Aorta (tissue), 5 donors: ENCODE measurements at regions of chr1 and their contacts with region 1.

Region 1: DNA sequence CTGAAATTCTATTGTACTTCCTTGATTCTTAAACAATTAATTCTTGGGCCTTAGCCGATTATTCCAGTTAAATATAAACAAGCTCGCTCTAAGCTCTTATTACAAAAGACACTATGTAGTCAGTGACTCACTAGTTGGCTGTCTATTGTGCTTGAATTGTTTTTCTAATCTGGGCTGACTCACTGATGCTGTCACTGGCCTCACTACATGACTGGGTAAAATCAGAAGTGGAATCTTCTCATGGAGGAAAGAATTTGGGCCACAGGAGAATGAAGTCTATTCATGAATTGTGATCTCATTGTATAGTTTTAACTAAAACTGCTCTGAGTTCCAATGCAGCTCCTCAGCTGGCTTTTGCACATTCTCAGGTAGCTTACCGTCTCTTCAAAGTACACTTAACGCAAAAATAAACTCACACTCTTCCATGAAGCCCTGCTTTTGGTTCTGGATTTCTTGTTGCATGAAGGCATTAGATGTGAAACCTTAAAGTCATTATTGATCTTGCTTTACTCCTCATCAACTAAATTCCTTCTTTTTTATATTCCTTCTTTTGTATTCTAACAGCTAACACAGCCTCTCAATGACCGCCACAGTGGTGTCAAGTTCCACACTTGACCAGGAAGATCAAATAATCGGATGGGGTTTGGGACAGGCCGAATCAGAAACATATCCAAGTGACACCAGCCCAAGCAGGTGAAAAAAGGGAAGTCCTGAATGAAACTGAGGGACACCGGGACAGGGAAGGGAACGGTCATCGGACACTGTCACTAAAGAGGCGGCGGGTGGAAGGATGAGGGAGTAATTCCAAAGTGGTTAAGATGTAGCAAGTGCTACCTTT is 80.9 kb upstream of the LBR start:
- DNase-seq: no peak
- ATAC-seq: peak; percentile 95
- H3K4me3 ChIP-seq: no peak overlapping the region
- H3K27ac ChIP-seq: peak overlapping the region; percentile 79
- H3K4me1 ChIP-seq: peaks cover 0 to 2% of the 10 kb centered on the region in 2 donors
- H3K27me3 ChIP-seq: no peaks in the 10 kb centered on the region

Region 2: GRCh38 chr1:225526878-225527277 is 18.1 kb after region 1 on chr1:
- intact Hi-C with region 1: no loop called
- DNase-seq: no peak
- ATAC-seq: no peak
- H3K4me3 ChIP-seq: no peak overlapping the region
- H3K27ac ChIP-seq: peak overlapping the region in 1 of 2 donors; percentile 22
- H3K4me1 ChIP-seq: peaks cover 0 to 4% of the 10 kb centered on the region in 2 donors
- H3K27me3 ChIP-seq: no peaks in the 10 kb centered on the region

Region 3: DNA sequence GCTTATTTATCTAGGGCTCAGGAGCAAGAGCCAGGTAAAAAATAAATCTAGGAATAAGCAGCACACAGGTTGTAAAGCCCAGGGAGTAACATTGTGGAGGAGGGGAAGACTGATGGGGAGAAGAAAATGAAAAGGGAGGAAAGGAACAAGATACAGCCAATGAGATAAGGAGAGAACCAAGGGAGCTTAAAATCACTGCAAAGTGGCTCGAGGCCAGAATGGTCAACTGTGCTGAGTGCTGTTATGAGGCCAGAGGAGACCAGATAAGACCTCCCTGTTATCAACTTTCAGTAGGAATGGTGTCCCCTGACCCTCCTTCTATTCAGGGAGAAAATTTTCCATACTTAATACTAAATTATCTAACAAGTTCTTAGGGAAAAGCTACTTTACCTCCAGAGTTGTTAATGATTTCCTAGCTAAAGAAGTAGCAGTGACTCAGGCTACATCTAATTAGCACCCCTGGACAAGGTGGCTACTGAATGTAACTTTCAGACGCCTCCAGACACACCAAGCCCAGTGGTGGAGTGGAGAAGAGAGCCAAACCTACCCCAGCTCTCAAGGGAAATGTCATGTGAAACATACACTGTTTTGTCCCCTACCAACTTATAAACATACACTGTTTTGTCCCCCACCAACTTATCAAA is 118.7 kb after region 1 on chr1:
- intact Hi-C with region 1: loop called in 1 of 2 experiments (anchors 10 kb)
- DNase-seq: no peak
- ATAC-seq: no peak
- H3K4me3 ChIP-seq: no peak overlapping the region
- H3K27ac ChIP-seq: peak overlapping the region in 1 of 2 donors; percentile 4
- H3K4me1 ChIP-seq: peaks cover 2 to 7% of the 10 kb centered on the region in 2 donors
- H3K27me3 ChIP-seq: no peaks in the 10 kb centered on the region